Esophagus muscularis mucosa (tissue), 4 donors: ENCODE measurements at regions of chr4 and their contacts with region 1.

Region 1: GRCh38 chr4:144174401-144175067 is 34.0 kb upstream of the GYPA start:
- DNase-seq: no peak
- H3K4me3 ChIP-seq: no peak overlapping the region
- H3K27ac ChIP-seq: no peak overlapping the region
- H3K4me1 ChIP-seq: peaks cover 0 to 3% (median 0%) of the 10 kb centered on the region in 4 donors
- H3K27me3 ChIP-seq: no peaks in the 10 kb centered on the region
- CTCF ChIP-seq: peak; percentile 33 to 43 (median 42)
- EP300 ChIP-seq: no peak
- POLR2A ChIP-seq: no peak

Region 2: DNA sequence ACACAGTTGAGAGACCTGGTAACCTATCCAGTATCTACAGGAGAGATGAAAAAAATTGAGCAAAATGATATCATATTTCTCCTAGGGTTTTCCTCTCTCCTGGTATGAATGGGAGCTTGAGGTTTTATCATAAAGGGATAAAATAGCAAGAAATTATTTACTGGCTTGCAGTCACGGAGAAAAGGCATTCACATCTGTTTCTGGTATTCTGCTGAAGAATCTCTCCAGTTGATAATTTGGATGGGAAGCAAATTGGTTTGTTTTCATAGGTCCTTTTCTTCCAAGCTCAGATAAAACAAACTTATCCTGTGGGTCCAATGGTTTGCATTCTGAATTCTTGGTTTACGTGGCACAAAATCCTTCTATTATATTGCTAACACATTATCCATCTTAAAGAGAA is 49.1 kb after region 1 on chr4:
- intact Hi-C with region 1: no loop called
- DNase-seq: no peak
- H3K4me3 ChIP-seq: no peak overlapping the region
- H3K27ac ChIP-seq: no peak overlapping the region
- H3K4me1 ChIP-seq: no peaks in the 10 kb centered on the region
- H3K27me3 ChIP-seq: no peaks in the 10 kb centered on the region
- CTCF ChIP-seq: no peak
- EP300 ChIP-seq: no peak
- POLR2A ChIP-seq: no peak

Region 3: DNA sequence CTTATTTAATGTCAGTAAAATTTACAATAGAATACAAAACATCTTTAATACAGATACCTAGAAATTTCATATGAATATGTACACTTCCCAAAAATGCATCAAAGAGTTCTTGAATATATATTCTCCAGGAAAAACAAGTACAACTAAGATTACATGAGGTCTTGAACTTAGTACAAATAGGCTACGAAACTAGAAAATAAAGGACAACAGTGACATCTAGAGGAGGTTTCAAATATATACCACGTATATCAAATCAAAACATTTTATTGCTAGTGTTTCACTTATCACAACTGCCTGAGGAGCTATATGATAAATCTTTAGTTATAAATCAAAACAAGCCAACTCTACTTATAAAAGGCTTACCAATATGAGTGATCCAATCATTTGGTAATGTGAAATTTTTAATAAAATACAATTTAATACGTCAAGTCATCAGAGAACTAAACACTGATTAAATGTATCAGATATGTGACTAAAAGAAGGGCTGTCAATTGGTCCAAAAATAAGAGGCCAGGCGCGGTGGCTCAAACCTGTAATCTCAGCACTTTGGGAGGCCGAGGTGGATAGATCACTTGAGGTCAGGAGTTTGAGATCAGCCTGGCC is 886.9 kb after region 1 on chr4:
- intact Hi-C with region 1: loop called (anchors 10 kb)
- DNase-seq: no peak
- H3K4me3 ChIP-seq: no peak overlapping the region
- H3K27ac ChIP-seq: no peak overlapping the region
- H3K4me1 ChIP-seq: peaks cover 0 to 8% (median 7%) of the 10 kb centered on the region in 4 donors
- H3K27me3 ChIP-seq: no peaks in the 10 kb centered on the region
- CTCF ChIP-seq: peak; percentile 35 to 54 (median 48)
- EP300 ChIP-seq: no peak
- POLR2A ChIP-seq: no peak